OCI-LY7 (cell line): ENCODE measurements at regions of chr1 and their contacts with region 1.

Region 1: DNA sequence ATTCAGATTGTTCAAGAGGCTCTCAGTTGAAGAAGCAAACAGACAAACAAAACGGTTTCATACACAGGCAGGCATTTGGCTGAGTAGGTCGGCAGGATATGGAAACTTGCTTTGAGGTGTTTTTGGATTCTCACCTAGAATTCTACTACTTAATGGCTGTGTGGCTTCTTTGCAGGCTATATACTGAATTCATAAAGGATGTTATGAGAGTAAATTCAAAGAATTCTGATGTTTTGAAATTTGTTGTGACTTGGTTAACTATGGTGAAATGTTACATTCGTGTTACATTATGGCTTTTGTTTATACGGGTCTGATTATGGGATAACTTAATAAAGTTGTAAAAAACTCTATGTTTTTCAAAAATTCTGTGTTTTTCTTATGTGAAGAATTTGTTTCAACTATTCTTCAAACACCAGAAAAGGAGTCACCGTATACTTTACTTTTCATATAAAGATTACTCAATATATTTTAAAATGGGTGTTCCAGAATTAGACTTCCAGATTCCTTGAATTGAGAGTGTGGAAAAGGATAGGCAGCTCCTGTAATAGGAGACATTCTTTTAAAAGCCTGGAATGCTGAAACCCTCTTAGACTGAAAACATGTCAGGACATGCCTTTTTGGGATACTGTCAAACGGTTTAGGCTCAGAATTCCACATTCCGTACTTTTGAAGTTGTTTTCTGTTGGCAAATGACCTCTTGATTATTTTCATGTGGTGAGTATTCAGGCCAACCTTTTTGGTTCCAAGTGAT is 8.2 kb upstream of the IRF2BP2 start:
- DNase-seq: no peak
- H3K4me3 ChIP-seq: no peak overlapping the region
- H3K27ac ChIP-seq: no peak overlapping the region
- H3K4me1 ChIP-seq: peaks cover 24% of the 10 kb centered on the region
- CTCF ChIP-seq: no peak

Region 2: GRCh38 chr1:234631721-234632125 is 13.6 kb after region 1 on chr1:
- CTCF ChIA-PET with region 1: no interaction called
- POLR2A ChIA-PET with region 1: interaction called, 10 read pairs
- intact Hi-C with region 1: no loop called
- DNase-seq: no peak
- H3K4me3 ChIP-seq: no peak overlapping the region
- H3K27ac ChIP-seq: no peak overlapping the region
- H3K4me1 ChIP-seq: no peaks in the 10 kb centered on the region
- CTCF ChIP-seq: no peak